A673 (cell line): ENCODE measurements at regions of chr19 and their contacts with region 1.

Region 1: GRCh38 chr19:39557441-39558151 is 17.6 kb upstream of the EID2 start:
- DNase-seq: no peak
- H3K4me3 ChIP-seq: peak overlapping the region; percentile 8
- H3K27ac ChIP-seq: no peak overlapping the region
- H3K4me1 ChIP-seq: no peaks in the 10 kb centered on the region
- H3K27me3 ChIP-seq: peaks cover 25% of the 10 kb centered on the region
- CTCF ChIP-seq: no peak

Region 2: DNA sequence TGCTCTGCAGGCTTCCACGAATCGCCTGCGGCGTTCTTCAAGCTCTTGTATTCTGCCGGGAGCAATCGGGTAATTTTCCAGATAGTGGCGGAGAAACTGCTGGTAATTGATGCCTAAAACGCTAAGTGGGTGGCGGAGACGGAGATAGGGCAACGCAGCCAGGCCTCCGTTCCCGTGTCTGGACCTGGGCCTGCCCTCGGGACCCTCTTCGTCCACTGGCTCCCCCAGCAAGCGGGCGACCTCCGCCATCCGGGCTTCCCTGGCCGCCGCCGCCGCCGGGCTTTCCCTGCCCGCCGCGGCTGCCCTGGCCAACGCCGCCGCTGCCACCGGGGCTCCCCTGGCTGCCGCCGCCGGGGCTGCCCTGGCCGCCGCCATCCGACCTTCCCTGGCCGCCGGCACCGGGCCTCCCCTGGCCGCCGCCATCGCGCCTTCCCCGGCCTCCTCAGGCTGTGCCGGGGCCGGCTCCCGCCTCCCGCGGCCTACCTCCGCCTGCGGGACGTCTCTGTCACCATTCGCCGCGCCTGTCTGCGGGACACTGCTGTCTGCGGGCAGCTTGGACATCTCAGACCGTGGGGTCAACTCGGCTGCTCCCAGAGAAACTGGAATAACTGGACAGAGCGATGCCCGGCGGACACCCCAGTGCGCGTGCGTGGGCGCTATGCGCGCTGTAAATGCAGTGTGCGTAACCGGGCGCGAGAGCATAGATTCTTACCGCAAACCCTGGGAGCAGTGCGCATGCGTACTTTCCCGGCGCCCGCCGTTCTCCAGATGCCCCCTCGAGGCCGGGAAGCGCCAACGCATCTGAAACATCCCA is 17.9 kb before region 1 on chr19 and contains the start of gene EID2:
- CTCF ChIA-PET with region 1: no interaction called
- POLR2A ChIA-PET with region 1: no interaction called
- intact Hi-C with region 1: no loop called
- DNase-seq: peak; percentile 95
- H3K4me3 ChIP-seq: peak within 1 kb of the TSS; percentile 79
- H3K27ac ChIP-seq: peak within 1 kb of the TSS; percentile 86
- H3K4me1 ChIP-seq: peaks cover 10% of the 10 kb centered on the region
- H3K27me3 ChIP-seq: peaks cover under 1% of the 10 kb centered on the region
- CTCF ChIP-seq: peak; percentile 86; the same call in 1 of the 2 replicates
- total RNA-seq, gene EID2: 25.0 and 25.2 TPM in 2 replicates

Region 3: GRCh38 chr19:39671738-39672363 is 114.3 kb after region 1 on chr19:
- CTCF ChIA-PET with region 1: no interaction called
- POLR2A ChIA-PET with region 1: no interaction called
- intact Hi-C with region 1: loop called (anchors 1 kb)
- DNase-seq: peak; percentile 65
- H3K4me3 ChIP-seq: no peak overlapping the region
- H3K27ac ChIP-seq: no peak overlapping the region
- H3K4me1 ChIP-seq: no peaks in the 10 kb centered on the region
- H3K27me3 ChIP-seq: peaks cover 3% of the 10 kb centered on the region
- CTCF ChIP-seq: peak; percentile 65